ENCODE measurements at regions of chrX and their contacts with region 1.

Region 1: DNA sequence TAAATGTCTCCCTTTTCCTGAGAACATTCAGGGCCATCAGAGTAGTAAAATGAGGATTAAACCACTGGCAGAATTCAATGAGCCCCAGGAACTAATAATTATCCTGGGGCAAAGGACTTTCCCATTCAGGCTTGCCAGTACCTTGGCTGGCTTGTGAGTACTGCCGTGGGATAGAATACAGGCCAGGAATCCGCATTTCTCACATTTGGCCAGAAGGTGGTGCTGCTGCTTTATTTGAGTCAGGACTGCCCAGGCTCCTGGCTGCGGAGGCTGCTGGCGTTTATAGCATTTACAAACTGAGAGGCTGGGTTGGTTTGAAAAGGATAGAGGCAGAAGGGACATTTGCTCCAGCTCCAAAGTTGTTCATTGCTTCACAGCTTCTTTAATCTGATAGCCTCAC is 91.4 kb downstream of the RTL9 start:
- DNase-seq: peak; percentile 64 to 74 (median 71)
- ATAC-seq: peak; percentile 99
- H3K4me3 ChIP-seq: no peak overlapping the region
- H3K27ac ChIP-seq: no peak overlapping the region
- H3K4me1 ChIP-seq: no peaks in the 10 kb centered on the region
- H3K27me3 ChIP-seq: peaks cover 5 to 24% of the 10 kb centered on the region in 2 experiments; a peak in 3 of 5 replicates
- CTCF ChIP-seq: peak; percentile 75 to 78 (median 77)
- EP300 ChIP-seq: no peak
- POLR2A ChIP-seq: no peak
- RAD21 ChIP-seq: peak; percentile 56 to 78

Region 2: GRCh38 chrX:110531873-110532580 is 82.0 kb after region 1 on chrX:
- CTCF ChIA-PET with region 1: no interaction called
- POLR2A ChIA-PET with region 1: no interaction called
- in situ Hi-C with region 1: no loop called
- intact Hi-C with region 1: no loop called
- DNase-seq: no peak
- ATAC-seq: no peak
- H3K4me3 ChIP-seq: no peak overlapping the region
- H3K27ac ChIP-seq: no peak overlapping the region
- H3K4me1 ChIP-seq: no peaks in the 10 kb centered on the region
- H3K27me3 ChIP-seq: no peaks in the 10 kb centered on the region
- CTCF ChIP-seq: no peak
- EP300 ChIP-seq: no peak
- POLR2A ChIP-seq: no peak
- RAD21 ChIP-seq: no peak

Region 3: DNA sequence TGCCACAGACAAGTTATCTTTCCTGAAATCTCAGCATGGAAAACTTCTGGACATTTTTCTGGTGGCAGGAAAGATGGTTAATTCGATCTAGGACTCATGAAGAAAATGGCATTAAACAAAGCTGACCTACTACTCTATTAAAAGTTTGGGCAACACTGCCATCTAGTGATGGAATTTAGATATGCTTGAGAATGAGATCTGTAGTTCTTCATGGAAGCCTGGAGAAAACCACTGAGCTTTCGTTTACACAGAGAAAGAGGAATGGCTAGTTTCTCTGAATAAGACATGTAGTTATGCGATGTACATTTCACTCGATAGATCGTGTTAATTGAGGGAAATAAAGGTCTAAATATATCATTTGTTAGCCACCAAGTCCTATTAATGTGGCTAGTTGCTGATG is 397.3 kb after region 1 on chrX:
- CTCF ChIA-PET with region 1: interaction called, 9 read pairs
- POLR2A ChIA-PET with region 1: no interaction called
- in situ Hi-C with region 1: loop called (anchors 5 kb)
- intact Hi-C with region 1: loop called (anchors 1 kb)
- DNase-seq: peak; percentile 36 to 67 (median 47)
- ATAC-seq: peak; percentile 91
- H3K4me3 ChIP-seq: no peak overlapping the region
- H3K27ac ChIP-seq: no peak overlapping the region
- H3K4me1 ChIP-seq: no peaks in the 10 kb centered on the region; a peak in 1 of 5 replicates
- H3K27me3 ChIP-seq: no peaks in the 10 kb centered on the region
- CTCF ChIP-seq: peak; percentile 29 to 63 (median 46); a peak in 4 of 6 replicates
- EP300 ChIP-seq: no peak
- POLR2A ChIP-seq: no peak
- RAD21 ChIP-seq: peak; percentile 44 to 64

Region 4: DNA sequence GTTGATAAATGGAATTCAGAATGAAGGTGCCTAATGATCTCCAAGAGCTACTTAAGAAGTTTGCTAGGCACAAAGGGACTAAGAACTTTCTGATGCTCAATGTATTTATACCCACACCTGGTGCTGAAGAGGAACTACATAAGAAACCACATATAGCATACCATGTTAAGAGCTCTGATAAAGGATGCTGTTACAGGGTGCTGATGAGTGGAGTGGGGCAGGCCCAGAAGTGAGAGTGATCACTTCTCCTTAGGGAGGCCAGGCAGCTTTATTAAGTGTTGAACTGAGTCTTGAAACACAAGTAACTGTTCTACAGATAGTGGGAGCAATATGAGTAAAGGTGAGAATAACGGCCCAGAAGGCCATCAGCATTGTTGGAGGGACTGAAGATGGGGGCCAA is 413.8 kb after region 1 on chrX:
- CTCF ChIA-PET with region 1: no interaction called
- POLR2A ChIA-PET with region 1: no interaction called
- in situ Hi-C with region 1: no loop called
- intact Hi-C with region 1: no loop called
- DNase-seq: no peak
- ATAC-seq: no peak
- H3K4me3 ChIP-seq: no peak overlapping the region
- H3K27ac ChIP-seq: no peak overlapping the region
- H3K4me1 ChIP-seq: no peaks in the 10 kb centered on the region
- H3K27me3 ChIP-seq: no peaks in the 10 kb centered on the region
- CTCF ChIP-seq: no peak
- EP300 ChIP-seq: no peak
- POLR2A ChIP-seq: no peak
- RAD21 ChIP-seq: no peak